ENCODE measurements at regions of chr7 and their contacts with region 1.

Region 1: DNA sequence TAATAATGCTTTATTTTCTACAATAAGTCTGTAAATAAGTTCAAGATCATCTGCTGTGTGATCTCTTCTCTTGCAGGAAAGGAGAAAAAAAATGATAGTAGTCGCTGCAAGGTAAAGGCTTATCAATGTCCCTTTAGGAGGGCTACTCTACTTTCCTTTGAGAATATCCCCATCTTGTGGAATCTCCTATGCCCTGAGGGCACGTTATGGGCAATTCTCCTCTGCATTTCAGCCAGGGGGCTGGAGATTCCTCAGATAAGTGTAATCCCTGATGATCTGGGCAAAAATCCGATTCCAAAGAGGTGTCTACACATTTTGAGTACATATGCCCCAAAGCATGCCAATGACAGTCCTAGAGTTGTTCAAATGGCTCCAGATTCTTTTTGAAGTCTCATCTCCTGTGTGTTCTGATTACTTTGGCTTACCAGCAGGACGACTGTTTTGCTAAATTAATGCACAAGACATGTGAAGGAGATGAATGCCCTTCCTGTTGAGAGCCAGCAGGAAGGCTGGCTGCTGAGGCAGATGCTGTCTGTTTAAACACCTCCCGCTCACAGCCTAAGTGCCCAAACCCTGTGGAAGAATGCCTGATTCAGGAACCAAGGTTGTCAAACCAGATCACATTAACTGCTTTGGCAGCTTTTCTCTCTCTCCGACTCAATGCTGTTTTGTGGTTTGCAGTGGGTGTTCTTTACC is 171.2 kb upstream of the COL1A2 start:
- DNase-seq: no peak
- H3K4me3 ChIP-seq: no peak overlapping the region
- CTCF ChIP-seq: peak; percentile 52

Region 2: DNA sequence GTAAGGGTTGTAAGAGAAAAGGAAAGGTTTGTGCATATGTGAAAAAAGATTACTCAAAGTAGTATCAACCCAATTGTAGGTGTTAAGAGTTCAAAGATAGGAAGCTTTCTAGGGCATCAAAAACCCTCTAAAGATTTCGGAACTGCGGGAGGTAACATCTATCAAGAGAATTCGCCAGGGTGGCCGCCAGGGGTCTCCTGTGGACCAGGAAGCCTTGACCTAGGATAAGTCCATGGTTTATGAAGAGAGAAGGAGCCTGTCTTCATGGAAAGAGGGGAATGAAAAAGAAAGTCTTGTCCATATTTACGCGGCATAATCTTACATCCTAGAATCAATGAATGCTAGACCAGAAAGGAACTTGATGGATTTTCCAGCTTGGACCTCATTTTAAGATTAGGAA is 508.3 kb before region 1 on chr7:
- CTCF ChIA-PET with region 1: interaction called, 12 read pairs
- POLR2A ChIA-PET with region 1: no interaction called
- DNase-seq: no peak
- H3K4me3 ChIP-seq: no peak overlapping the region
- CTCF ChIP-seq: peak; percentile 54

Region 3: GRCh38 chr7:93799750-93800357 is 423.7 kb before region 1 on chr7:
- CTCF ChIA-PET with region 1: interaction called, 12 read pairs
- POLR2A ChIA-PET with region 1: no interaction called
- DNase-seq: no peak
- H3K4me3 ChIP-seq: no peak overlapping the region
- CTCF ChIP-seq: peak; percentile 21

Measured in AG04449 (cell line).